PC-9 (cell line): ENCODE measurements at regions of chr10 and their contacts with region 1.

Region 1: DNA sequence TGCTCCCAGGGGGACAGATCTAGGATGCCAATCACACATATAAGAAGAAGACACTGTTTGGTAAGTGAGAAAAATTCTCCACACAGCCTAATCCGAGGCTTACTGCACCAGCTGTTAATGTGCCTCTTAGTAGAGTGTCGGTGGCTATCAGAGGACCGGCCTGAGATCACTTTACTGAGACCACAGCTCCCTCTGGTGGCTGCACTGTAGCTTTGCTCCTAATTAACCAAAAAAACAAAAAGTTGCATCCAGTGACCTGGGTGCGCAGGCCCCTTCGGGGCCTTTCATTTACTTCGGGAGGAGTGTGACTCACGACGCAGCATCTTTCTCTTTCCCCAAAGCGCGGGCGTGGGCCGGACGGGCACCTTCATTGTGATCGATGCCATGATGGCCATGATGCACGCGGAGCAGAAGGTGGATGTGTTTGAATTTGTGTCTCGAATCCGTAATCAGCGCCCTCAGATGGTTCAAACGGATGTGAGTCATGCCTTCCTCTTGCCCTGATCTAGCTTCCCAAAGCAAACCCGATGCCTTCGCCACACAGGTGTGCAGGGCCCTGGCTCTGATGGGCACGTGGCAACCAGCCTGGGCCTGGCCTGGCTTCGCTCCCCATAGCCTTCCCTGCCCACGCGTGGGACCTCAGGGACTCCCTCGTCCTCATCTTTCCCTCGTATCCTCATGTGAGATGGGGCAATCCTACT is 56.7 kb downstream of the MKI67 start:
- DNase-seq: peak; percentile 42 to 48
- H3K4me3 ChIP-seq: no peak overlapping the region
- H3K27ac ChIP-seq: no peak overlapping the region
- H3K4me1 ChIP-seq: peaks cover 12% of the 10 kb centered on the region
- H3K27me3 ChIP-seq: no peaks in the 10 kb centered on the region
- CTCF ChIP-seq: peak; percentile 80

Region 2: DNA sequence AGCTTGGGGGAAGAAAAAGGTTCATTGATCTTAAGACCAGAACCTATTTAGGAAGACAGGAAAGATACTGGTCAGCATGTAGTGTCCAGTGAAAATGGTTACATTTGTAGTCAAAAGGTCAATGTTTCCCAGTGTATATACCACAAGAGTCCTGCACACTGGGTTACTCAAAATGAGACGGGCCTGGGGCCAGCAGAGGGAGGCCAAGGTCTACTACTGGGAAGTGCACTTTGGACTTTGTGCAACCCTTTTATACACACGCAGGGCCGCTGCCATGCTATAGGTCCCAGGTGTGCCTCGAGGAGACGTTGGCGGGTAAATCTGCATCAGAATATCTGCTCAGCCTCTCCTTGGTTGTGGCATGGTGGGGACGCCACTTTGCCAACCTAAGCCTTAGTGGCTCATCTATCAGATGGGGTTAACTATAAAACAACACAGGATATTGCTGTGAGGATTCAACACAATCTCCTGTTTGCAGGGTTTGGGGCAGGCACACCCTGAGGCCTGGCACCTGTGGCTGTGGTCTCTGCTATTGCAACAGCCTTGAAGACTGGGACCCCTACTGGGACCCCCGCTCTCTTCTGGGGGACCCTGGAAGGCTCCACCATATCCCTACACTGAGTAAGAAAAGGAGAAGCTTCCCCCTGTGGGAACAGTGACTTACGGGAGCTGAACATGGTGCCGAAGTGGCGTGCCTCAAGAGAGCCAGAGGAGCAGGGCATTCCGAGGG is 196.5 kb before region 1 on chr10:
- CTCF ChIA-PET with region 1: no interaction called
- POLR2A ChIA-PET with region 1: no interaction called
- intact Hi-C with region 1: loop called (anchors 1 kb)
- DNase-seq: no peak
- H3K4me3 ChIP-seq: no peak overlapping the region
- H3K27ac ChIP-seq: no peak overlapping the region
- H3K4me1 ChIP-seq: no peaks in the 10 kb centered on the region
- H3K27me3 ChIP-seq: 0 out of 2 replicates have a peak, but pooled peaks cover 5% of the 10 kb centered on the region
- CTCF ChIP-seq: no peak

Region 3: DNA sequence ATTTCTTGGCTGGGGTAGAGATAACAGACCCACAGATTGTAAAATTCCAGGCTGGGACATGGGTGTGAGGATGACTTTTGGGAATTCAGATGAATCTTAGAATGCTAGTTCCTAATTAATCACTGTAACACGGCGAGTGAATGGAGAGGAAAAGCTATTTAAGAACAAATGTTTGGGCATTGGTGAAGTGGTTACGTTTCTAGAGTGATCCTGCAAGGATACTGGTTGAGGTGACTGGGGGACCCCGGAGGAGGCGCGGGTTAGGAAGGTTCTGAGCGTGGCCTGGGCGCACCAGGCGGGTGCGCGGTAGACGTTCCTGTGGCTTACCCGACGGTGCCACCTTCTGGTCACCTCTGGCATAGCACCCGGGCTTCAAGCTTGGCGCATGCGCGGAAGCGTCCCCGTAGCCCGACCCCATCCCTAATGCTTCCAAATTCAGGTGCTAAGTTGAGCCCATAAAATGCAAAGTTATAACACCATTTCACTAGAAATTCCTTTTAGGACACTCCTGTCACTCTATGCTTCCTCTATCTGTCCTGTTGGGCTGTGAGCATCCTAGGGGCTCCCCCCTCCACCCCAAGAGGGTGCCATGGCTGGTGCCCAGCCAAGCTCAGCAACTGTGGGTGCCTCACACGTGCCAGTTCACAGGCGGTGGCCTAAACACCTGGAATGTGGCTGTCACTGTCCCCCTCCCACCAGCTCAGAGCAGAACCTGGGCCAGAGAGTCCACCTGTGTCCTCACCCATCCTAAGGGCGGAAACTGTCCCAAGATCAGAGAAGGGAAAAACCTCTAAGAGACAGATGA is 58.1 kb before region 1 on chr10:
- CTCF ChIA-PET with region 1: interaction called, 4 read pairs
- POLR2A ChIA-PET with region 1: no interaction called
- intact Hi-C with region 1: loop called (anchors 1 kb)
- DNase-seq: peak in 1 of 2 experiments; percentile 80
- H3K4me3 ChIP-seq: no peak overlapping the region
- H3K27ac ChIP-seq: no peak overlapping the region
- H3K4me1 ChIP-seq: no peaks in the 10 kb centered on the region; the same call in 1 of the 2 replicates
- H3K27me3 ChIP-seq: no peaks in the 10 kb centered on the region
- CTCF ChIP-seq: peak; percentile 90